ENCODE measurements at regions of chr5 and their contacts with region 1.

Region 1: GRCh38 chr5:91383027-91383955 is at the start of gene ARRDC3:
- DNase-seq: peak; percentile 93 to 97 (median 96)
- H3K4me3 ChIP-seq: peak within 1 kb of the TSS; percentile 71 to 99 (median 88)
- H3K27ac ChIP-seq: peak within 1 kb of the TSS; percentile 94 to 100 (median 100)
- H3K27me3 ChIP-seq: no peaks in the 10 kb centered on the region
- CTCF ChIP-seq: peak in 36 of 56 donors; percentile 4 to 52 (median 30)
- total RNA-seq, gene ARRDC3: 19.2 to 154 (median 46.7) TPM

Region 2: DNA sequence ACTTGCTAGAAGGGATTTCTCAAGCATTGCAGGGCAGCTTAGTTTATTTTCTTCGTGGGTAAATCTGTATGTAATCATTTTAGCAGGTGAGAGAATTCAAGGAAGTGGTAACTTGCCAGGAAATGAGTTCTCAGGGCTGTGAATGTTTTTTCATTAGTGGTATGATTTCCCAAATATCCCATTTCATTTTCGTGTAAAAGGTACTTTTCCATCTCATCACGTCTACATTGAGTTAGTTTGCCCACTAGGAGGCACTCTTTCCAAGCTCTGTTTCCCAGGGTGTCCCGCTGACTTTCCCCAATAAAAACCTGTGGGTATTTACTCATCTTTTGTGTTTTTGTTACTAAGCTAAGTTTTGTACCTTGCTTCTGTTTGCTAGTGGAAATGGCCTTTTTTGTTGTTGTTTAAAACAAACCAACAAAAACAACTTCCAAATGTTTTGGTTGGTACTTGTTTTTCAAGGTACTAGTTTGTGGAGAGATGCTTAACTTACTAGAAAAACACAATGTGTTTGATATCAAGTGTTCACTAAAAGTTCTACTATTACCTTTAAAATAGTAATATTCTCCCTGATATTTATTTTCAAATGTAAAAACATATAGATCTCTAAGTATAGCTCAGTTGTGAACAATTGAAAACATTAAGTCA is 451.1 kb before region 1 on chr5:
- intact Hi-C with region 1: loop called in 1 of 2 experiments (anchors 5 kb)
- DNase-seq: peak in 1 of 10 donors; percentile 21
- H3K4me3 ChIP-seq: no peak overlapping the region
- H3K27ac ChIP-seq: no peak overlapping the region
- H3K27me3 ChIP-seq: no peaks in the 10 kb centered on the region
- CTCF ChIP-seq: peak; percentile 62 to 88 (median 76)

Region 3: DNA sequence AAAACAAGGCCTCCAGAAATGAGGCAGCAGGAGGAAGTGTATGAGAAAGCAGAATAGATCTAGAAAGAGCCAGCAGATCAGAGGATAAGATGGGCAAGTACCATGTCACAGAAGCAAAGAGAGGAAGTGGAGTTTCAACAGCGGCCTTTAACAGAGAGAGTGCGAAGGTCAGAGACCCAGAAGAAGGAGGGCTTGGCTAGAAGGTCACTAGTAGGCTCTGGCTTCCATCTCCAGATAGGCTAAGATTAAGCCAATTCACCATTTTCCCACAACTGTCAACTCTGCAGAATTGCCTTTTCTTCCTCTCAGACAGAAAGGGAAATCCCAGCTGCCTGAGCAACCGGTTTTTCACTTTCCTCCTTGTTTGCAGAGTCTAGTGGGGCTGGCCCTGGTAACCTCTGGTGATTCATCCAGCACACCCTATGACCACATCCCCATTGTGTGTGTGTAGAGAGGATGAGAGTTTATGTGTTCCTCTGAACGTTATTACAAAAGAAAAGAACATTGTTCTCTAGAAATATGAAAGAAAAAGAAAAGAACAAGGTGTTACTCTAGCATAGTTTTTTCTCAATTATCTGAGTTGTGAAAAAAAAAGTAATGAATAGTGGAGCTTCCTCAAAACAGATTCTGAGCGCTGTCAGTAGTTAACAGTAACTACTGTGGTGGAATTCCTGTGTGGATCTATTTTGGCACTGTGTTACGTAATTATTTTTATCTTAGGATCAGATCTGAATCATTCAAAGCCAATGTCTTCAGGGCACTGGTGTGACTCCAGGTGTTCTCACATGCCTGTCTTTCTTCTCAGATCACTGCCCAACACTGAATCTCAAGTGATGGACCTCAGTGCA is 220.5 kb before region 1 on chr5:
- intact Hi-C with region 1: loop called in 1 of 2 experiments (anchors 5 kb)
- DNase-seq: peak in 5 of 10 donors; percentile 34 to 69 (median 51)
- H3K4me3 ChIP-seq: no peak overlapping the region
- H3K27ac ChIP-seq: peak overlapping the region in 45 of 59 donors; percentile 3 to 89 (median 56)
- H3K27me3 ChIP-seq: no peaks in the 10 kb centered on the region
- CTCF ChIP-seq: no peak

Region 4: GRCh38 chr5:91245871-91246270 is 137.4 kb before region 1 on chr5:
- intact Hi-C with region 1: loop called in 1 of 2 experiments (anchors 10 kb)
- DNase-seq: no peak
- H3K4me3 ChIP-seq: no peak overlapping the region
- H3K27ac ChIP-seq: peak overlapping the region in 1 of 59 donors; percentile 62
- H3K27me3 ChIP-seq: no peaks in the 10 kb centered on the region
- CTCF ChIP-seq: peak in 42 of 56 donors; percentile 10 to 66 (median 37)

Region 5: GRCh38 chr5:91302305-91302704 is 81.0 kb before region 1 on chr5:
- intact Hi-C with region 1: loop called (anchors 2 kb)
- DNase-seq: no peak
- H3K4me3 ChIP-seq: no peak overlapping the region
- H3K27ac ChIP-seq: peak overlapping the region in 58 of 59 donors; percentile 7 to 97 (median 81)
- H3K27me3 ChIP-seq: no peaks in the 10 kb centered on the region
- CTCF ChIP-seq: peak in 4 of 56 donors; percentile 4 to 25 (median 11)

Measured in dorsolateral prefrontal cortex (tissue), 120 donors.